Colonic mucosa (tissue), 4 donors: ENCODE measurements at regions of chr17 and their contacts with region 1.

Region 1: GRCh38 chr17:75319904-75320691 is 30.9 kb upstream of the SLC25A19 start:
- DNase-seq: no peak
- H3K4me3 ChIP-seq: no peak overlapping the region
- H3K27ac ChIP-seq: no peak overlapping the region
- H3K4me1 ChIP-seq: no peaks in the 10 kb centered on the region
- H3K27me3 ChIP-seq: no peaks in the 10 kb centered on the region
- CTCF ChIP-seq: no peak

Region 2: DNA sequence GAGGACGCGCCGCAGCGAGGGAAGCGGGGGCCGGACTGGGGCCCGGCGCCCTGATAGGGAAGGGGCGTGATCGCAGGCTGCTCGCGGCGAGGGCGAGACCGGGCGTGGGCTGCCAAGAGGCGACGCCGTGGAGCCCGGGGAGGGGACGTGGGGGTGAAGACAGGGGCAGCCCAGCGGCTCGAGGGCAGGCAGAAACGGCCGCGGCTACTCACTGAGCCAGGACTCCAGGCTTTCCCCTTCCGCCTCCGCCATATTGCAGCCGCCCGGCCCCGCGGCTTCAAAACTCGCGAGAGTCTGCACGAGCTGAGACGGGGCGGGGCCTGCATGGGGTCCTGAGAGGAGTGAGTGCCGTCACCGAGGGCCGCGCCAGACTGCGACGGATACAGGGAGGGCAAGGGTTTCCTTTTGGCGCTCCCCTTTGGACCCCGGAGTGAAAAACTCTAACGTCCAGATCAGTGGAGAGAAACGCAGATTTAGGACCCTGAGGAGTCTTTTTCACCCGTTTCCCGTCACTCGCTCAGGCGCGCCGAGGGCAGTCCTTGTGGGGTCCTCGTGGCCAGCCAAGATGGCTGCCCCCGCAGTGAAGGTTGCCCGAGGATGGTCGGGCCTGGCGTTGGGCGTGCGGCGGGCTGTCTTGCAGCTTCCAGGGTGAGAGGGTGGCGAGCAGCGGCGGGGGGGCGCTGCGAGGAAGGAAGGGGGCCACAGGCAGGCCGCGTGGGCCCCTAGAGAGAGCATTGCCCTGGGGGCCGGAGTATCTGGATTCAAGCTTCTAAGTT is 58.6 kb before region 1 on chr17 and contains the starts of genes GGA3 and MRPS7:
- intact Hi-C with region 1: no loop called
- DNase-seq: peak; percentile 98
- H3K4me3 ChIP-seq: peak within 1 kb of the TSS; percentile 93
- H3K27ac ChIP-seq: peak within 1 kb of the TSS; percentile 81
- H3K4me1 ChIP-seq: peaks cover 20% of the 10 kb centered on the region
- H3K27me3 ChIP-seq: no peaks in the 10 kb centered on the region
- CTCF ChIP-seq: no peak
- total RNA-seq, gene GGA3: 32.5 to 48.4 TPM
- total RNA-seq, gene MRPS7: 62.9 to 118 TPM

Region 3: DNA sequence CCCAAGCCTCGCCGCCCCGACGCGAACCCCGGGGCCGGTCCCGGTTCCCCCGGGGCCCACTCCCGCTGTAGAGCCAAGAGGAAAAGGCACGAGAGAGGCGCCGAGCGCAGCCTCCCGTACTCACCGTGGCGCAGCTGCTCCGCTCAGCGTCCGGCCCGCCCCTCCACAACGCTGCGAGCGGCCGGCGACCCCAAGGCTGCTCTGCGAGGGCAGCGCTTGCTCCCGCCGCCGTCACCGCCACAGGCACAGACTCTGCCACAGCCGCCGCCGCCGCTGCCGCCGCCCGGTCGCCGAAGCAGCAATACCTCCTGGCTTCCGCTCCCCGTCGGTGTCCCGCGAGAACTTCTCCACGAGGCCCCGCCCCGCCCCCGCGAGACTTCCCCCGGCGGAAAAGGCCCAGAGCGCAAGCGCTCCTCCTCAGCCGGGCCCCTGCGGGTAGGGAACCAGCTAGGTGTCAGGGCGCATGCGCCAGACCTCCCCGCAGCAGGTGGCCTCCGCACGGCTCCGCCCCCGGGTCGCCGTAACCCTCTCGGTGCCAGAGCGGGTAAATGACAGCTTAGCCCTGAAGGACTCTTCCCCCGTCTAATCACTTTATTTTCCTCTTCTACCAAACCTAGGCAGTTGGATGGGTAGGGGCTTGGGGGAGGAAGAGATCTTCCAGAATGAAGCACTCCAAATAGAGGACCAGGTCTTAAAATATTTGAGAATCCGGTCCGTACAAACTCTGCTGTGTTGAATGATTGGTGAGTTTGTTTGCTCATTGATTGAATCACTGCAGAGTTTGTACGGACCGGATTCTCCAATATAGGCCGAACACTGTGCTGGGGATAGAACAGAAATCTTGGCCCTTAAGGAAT is 85.5 kb after region 1 on chr17 and contains the start of gene GRB2:
- intact Hi-C with region 1: loop called (anchors 2 kb)
- DNase-seq: peak; percentile 99
- H3K4me3 ChIP-seq: peak within 1 kb of the TSS; percentile 100
- H3K27ac ChIP-seq: peak within 1 kb of the TSS; percentile 91
- H3K4me1 ChIP-seq: no peaks in the 10 kb centered on the region
- H3K27me3 ChIP-seq: no peaks in the 10 kb centered on the region
- CTCF ChIP-seq: no peak
- total RNA-seq, gene GRB2: 117 to 126 TPM